ENCODE measurements at regions of chr7 and their contacts with region 1.

Region 1: GRCh38 chr7:97845622-97846203 is 26.5 kb downstream of the ASNS start:
- DNase-seq: no peak
- H3K4me3 ChIP-seq: no peak overlapping the region
- H3K27ac ChIP-seq: no peak overlapping the region
- H3K4me1 ChIP-seq: no peaks in the 10 kb centered on the region
- H3K27me3 ChIP-seq: peaks cover 7% of the 10 kb centered on the region
- CTCF ChIP-seq: peak; percentile 75

Region 2: GRCh38 chr7:97337849-97338248 is 507.9 kb before region 1 on chr7:
- CTCF ChIA-PET with region 1: no interaction called
- POLR2A ChIA-PET with region 1: no interaction called
- intact Hi-C with region 1: no loop called
- DNase-seq: no peak
- H3K4me3 ChIP-seq: no peak overlapping the region
- H3K27ac ChIP-seq: no peak overlapping the region
- H3K4me1 ChIP-seq: no peaks in the 10 kb centered on the region
- H3K27me3 ChIP-seq: no peaks in the 10 kb centered on the region
- CTCF ChIP-seq: no peak

Region 3: DNA sequence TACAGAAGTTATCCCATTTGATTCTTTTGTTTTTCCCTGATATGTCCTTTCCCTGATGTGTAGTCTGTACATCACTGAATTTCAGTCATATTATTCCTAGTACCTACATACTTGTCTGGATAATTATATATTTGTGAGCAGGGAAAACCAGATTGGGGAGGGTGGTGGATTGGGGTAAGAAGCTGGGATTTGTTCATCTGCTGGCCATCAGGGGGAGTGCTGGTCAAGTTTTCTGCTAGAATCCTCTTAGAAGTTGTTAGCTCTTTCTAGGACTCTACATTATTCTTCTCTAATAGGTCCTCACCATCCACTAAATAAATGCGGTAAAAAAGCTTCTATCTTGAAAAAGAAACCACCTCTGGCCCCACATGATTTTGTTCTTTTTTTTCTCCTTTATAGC is 346.5 kb before region 1 on chr7:
- CTCF ChIA-PET with region 1: no interaction called
- POLR2A ChIA-PET with region 1: no interaction called
- intact Hi-C with region 1: loop called (anchors 5 kb)
- DNase-seq: peak in 1 of 2 experiments; percentile 16
- H3K4me3 ChIP-seq: no peak overlapping the region
- H3K27ac ChIP-seq: no peak overlapping the region
- H3K4me1 ChIP-seq: no peaks in the 10 kb centered on the region
- H3K27me3 ChIP-seq: no peaks in the 10 kb centered on the region
- CTCF ChIP-seq: peak; percentile 66

Region 4: DNA sequence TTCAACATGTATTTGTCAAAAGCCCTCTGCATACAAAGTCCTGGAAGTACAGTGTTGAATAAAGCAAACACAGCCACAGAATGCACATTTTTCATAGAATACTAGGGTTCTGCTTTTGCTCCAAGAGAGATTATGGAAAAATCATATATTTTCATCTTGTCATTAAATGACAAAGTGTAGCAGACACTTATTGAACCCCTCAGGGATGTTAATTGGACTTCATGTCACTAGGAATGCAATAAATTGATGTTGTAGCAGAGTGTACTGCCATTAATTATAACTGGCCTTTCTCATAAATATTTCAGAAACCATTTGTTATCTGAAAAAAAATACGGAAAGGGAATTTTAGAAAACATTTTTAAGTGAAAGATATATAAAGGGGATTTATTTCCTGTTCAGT is 178.4 kb before region 1 on chr7:
- CTCF ChIA-PET with region 1: no interaction called
- POLR2A ChIA-PET with region 1: no interaction called
- intact Hi-C with region 1: no loop called
- DNase-seq: no peak
- H3K4me3 ChIP-seq: no peak overlapping the region
- H3K27ac ChIP-seq: no peak overlapping the region
- H3K4me1 ChIP-seq: no peaks in the 10 kb centered on the region
- H3K27me3 ChIP-seq: 0 out of 2 replicates have a peak, but pooled peaks cover 5% of the 10 kb centered on the region
- CTCF ChIP-seq: no peak

Region 5: GRCh38 chr7:98014352-98014751 is 168.6 kb after region 1 on chr7:
- CTCF ChIA-PET with region 1: no interaction called
- POLR2A ChIA-PET with region 1: no interaction called
- intact Hi-C with region 1: loop called (anchors 2 kb)
- DNase-seq: no peak
- H3K4me3 ChIP-seq: no peak overlapping the region
- H3K27ac ChIP-seq: no peak overlapping the region
- H3K4me1 ChIP-seq: no peaks in the 10 kb centered on the region
- H3K27me3 ChIP-seq: no peaks in the 10 kb centered on the region
- CTCF ChIP-seq: no peak

Measured in PC-9 (cell line).